ENCODE measurements at regions of chr1 and their contacts with region 1.

Region 1: DNA sequence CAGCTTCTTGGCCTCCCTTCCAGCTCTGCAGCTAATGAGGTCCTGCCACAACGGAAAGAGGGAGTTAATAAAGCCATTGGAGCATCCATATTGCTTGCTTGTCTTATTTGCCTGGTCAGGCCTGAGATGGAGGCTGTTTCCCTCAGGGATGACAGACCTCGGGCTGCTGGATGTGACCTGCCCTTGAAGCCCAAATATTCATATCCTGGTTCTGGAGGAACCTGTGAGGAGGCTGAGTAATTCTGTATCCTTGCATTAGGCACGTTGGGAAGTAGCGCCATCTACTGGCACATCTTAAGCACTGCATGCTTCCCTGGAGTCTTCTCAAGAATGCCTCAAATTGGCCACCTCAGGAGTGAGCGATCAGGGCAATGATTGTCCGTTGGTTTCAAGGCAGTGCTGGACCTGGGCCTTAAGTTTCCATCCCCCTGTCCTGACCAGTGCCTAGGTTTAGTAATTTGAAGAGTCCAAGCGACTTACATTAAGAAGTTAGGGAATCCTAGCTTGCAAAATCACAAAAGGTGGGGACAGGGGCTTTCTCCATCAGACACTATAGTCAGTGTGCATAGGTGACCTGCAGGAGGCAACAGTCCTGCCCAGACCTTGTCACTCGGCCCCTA is 13.8 kb upstream of the NASP start:
- DNase-seq: peak; percentile 58
- H3K4me3 Mint-ChIP-seq: no peak overlapping the region
- H3K27ac Mint-ChIP-seq: no peak overlapping the region
- H3K4me1 Mint-ChIP-seq: no peaks in the 10 kb centered on the region
- H3K27me3 Mint-ChIP-seq: no peaks in the 10 kb centered on the region

Region 2: GRCh38 chr1:45512641-45513054 is 57.4 kb before region 1 on chr1:
- intact Hi-C with region 1: loop called (anchors 1 kb)
- DNase-seq: peak; percentile 45
- H3K4me3 Mint-ChIP-seq: no peak overlapping the region
- H3K27ac Mint-ChIP-seq: peak overlapping the region; percentile 34
- H3K4me1 Mint-ChIP-seq: peaks cover 21% of the 10 kb centered on the region
- H3K27me3 Mint-ChIP-seq: no peaks in the 10 kb centered on the region

Region 3: DNA sequence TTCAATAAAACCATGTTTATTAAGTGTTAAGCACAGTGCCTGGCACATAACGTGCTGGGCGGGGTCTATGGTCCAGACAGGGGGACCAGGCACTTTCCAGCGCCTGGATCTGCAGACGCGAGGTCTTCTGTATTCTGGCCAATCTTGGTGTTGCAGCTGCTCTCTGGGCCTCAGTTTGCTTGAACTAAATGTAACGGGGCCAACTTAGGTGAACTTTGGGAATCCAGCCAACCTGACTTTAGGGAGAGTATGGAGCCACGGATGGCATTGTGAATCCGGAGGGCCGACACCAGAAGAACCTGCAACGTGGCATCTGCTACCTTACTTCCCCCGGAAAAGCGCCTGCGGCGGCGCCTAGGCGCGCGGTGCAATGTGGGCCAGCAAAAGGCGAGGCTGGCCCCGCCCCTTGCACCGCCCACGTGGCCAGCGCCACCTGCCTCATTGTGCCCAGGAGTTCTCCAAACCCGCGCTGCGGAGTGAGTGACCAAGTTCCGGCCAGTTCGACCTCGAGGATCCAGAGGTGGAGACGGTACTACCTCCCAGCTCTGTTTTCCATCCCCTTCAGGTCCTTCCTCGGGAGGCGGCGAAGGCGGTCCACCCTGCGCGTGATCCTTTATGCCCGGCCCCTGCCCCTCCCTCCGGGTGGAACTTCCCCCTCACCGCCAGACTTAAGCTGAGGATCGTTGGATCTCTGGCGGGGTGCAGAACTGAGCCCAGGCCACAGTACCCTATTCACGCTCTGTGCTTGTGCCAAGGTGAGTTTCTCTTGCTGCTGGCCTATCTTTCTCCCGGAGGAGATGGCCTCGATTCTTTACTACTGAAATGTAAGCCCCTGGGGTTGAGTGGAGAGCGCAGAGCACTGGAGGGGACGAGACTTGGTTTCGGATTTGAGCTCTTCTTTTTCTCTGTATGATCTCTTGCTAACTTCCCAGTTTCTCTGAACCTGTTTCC is 19.4 kb before region 1 on chr1 and contains the start of gene AKR1A1:
- intact Hi-C with region 1: loop called (anchors 2 kb)
- DNase-seq: peak; percentile 84
- H3K4me3 Mint-ChIP-seq: peak within 1 kb of the TSS; percentile 96
- H3K27ac Mint-ChIP-seq: peak within 1 kb of the TSS; percentile 92
- H3K4me1 Mint-ChIP-seq: peaks cover 25% of the 10 kb centered on the region
- H3K27me3 Mint-ChIP-seq: peaks cover 3% of the 10 kb centered on the region
- total RNA-seq, gene AKR1A1: 191 and 210 TPM in 2 replicates

Region 4: GRCh38 chr1:45608175-45609156 is 38.4 kb after region 1 on chr1:
- intact Hi-C with region 1: no loop called
- DNase-seq: no peak
- H3K4me3 Mint-ChIP-seq: no peak overlapping the region
- H3K27ac Mint-ChIP-seq: peak overlapping the region; percentile 10
- H3K4me1 Mint-ChIP-seq: peaks cover 12% of the 10 kb centered on the region
- H3K27me3 Mint-ChIP-seq: no peaks in the 10 kb centered on the region